HepG2 (cell line): ENCODE measurements at regions of chr17 and their contacts with region 1.

Region 1: DNA sequence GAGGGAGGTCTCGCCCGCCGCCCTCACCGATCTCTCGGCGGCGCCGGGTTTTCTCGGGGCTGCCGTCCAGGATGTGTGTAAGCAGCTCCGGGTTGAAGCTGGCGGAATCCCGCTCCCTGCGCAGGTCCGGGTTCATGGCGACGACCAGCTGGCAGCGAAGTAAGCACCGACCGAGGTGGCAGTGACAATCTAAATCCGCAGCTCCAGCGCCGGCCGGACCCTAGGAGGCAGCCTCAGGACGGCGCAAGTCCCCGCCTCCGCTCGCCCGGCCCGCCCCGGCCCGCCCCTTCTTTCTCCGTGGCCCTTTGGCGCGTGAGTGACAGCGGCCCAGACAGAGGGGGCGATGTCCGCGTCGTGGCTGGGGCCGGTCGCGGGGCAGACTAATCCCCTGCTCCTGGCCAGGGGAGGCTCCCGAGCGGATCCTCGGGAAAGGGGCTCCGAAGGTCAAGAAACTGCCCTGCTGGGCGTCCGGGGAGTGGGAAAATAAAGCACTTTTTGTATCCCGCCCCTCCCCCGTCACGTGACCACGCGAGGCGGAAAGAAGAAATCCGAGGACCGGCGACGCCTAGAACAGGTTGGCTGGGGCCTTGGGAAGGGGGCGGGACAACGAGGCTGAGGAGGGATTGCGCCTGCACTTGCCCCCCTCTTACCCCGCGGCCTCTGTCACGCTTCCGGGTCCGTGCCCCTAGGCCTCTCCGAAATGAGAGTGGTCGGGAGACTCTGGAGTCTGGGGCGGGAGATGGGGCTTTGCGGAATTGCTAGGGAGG is at the starts of genes ACOX1 and TEN1:
- DNase-seq: peak; percentile 98
- ATAC-seq: peak; percentile 87
- H3K4me3 ChIP-seq: peak within 1 kb of the TSS; percentile 74 to 98 (median 93)
- H3K27ac ChIP-seq: peak within 1 kb of the TSS; percentile 99
- H3K4me1 ChIP-seq: peaks cover 80% of the 10 kb centered on the region
- H3K27me3 ChIP-seq: no peaks in the 10 kb centered on the region; a peak in 1 of 5 replicates
- CTCF ChIP-seq: peak; percentile 72
- EP300 ChIP-seq: peak; percentile 12 to 52; a peak in 3 of 4 replicates
- POLR2A ChIP-seq: peak; percentile 87 to 97
- RAD21 ChIP-seq: no peak; the same call in none of the 2 replicates
- total RNA-seq, gene ACOX1: 120 and 156 TPM in 2 replicates
- total RNA-seq, gene TEN1: 14.7 and 18.0 TPM in 2 replicates

Region 2: DNA sequence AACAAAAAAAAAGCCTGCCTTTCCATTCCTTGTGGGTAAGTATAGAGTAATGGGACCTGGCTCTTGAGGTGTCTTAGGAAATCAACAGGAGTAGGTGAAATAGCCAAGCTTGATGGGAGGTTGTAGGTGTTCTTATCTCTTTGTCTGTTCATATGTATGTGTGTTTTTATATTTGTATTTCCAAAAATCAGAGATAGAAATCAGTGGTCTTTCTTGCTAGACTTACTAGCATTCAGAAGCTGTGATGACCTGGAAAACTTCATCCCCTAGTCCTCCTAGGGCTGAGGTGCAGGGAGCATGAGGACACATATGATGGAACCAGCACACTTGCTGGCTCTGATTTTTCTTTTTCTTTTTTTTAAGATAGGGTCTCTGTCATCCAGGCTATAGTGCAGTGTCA is 192.2 kb before region 1 on chr17:
- CTCF ChIA-PET with region 1: no interaction called
- POLR2A ChIA-PET with region 1: no interaction called
- in situ Hi-C with region 1: no loop called
- intact Hi-C with region 1: no loop called
- DNase-seq: no peak
- ATAC-seq: no peak
- H3K4me3 ChIP-seq: no peak overlapping the region
- H3K27ac ChIP-seq: no peak overlapping the region
- H3K4me1 ChIP-seq: peaks cover 45% of the 10 kb centered on the region
- H3K27me3 ChIP-seq: no peaks in the 10 kb centered on the region; a peak in 1 of 5 replicates
- CTCF ChIP-seq: no peak
- EP300 ChIP-seq: no peak
- POLR2A ChIP-seq: no peak
- RAD21 ChIP-seq: no peak

Region 3: GRCh38 chr17:75872434-75873351 is 106.4 kb before region 1 on chr17:
- CTCF ChIA-PET with region 1: no interaction called
- POLR2A ChIA-PET with region 1: interaction called, 16 read pairs
- in situ Hi-C with region 1: no loop called
- intact Hi-C with region 1: no loop called
- DNase-seq: peak; percentile 99
- ATAC-seq: peak; percentile 64
- H3K4me3 ChIP-seq: peak overlapping the region; percentile 13 to 62 (median 36); a peak in 5 of 6 replicates
- H3K27ac ChIP-seq: peak overlapping the region; percentile 97
- H3K4me1 ChIP-seq: peaks cover 88% of the 10 kb centered on the region
- H3K27me3 ChIP-seq: no peaks in the 10 kb centered on the region
- CTCF ChIP-seq: peak; percentile 43
- EP300 ChIP-seq: peak; percentile 81 to 87; a peak in 3 of 4 replicates
- POLR2A ChIP-seq: peak in 1 of 2 experiments; percentile 84; a peak in 2 of 4 replicates
- RAD21 ChIP-seq: peak; percentile 68

Region 4: GRCh38 chr17:75904749-75905521 is 74.2 kb before region 1 on chr17 and contains the start of gene MRPL38:
- CTCF ChIA-PET with region 1: no interaction called
- POLR2A ChIA-PET with region 1: interaction called, 32 read pairs
- in situ Hi-C with region 1: no loop called
- intact Hi-C with region 1: loop called (anchors 2 kb)
- DNase-seq: peak; percentile 95
- ATAC-seq: peak; percentile 97
- H3K4me3 ChIP-seq: peak within 1 kb of the TSS; percentile 95 to 100 (median 97)
- H3K27ac ChIP-seq: peak within 1 kb of the TSS; percentile 76
- H3K4me1 ChIP-seq: peaks cover 38% of the 10 kb centered on the region
- H3K27me3 ChIP-seq: no peaks in the 10 kb centered on the region; a peak in 1 of 5 replicates
- CTCF ChIP-seq: peak; percentile 100
- EP300 ChIP-seq: peak in 1 of 2 experiments; percentile 58; a peak in 2 of 4 replicates
- POLR2A ChIP-seq: peak; percentile 75 to 86
- RAD21 ChIP-seq: peak; percentile 100
- total RNA-seq, gene MRPL38: 88.8 and 125 TPM in 2 replicates

Region 5: GRCh38 chr17:75940724-75941441 is 38.2 kb before region 1 on chr17 and contains the start of gene FBF1:
- CTCF ChIA-PET with region 1: no interaction called
- POLR2A ChIA-PET with region 1: interaction called, 16 read pairs
- in situ Hi-C with region 1: no loop called
- intact Hi-C with region 1: no loop called
- DNase-seq: peak; percentile 93
- ATAC-seq: peak; percentile 96
- H3K4me3 ChIP-seq: peak within 1 kb of the TSS; percentile 73 to 83 (median 79)
- H3K27ac ChIP-seq: peak within 1 kb of the TSS; percentile 49
- H3K4me1 ChIP-seq: peaks cover 27% of the 10 kb centered on the region
- H3K27me3 ChIP-seq: no peaks in the 10 kb centered on the region; a peak in 1 of 5 replicates
- CTCF ChIP-seq: peak; percentile 58
- EP300 ChIP-seq: peak in 1 of 2 experiments; percentile 31; a peak in 1 of 4 replicates
- POLR2A ChIP-seq: peak; percentile 89 to 94
- RAD21 ChIP-seq: peak; percentile 70
- total RNA-seq, gene FBF1: 3.5 and 8.1 TPM in 2 replicates

Region 6: GRCh38 chr17:75959051-75959838 is 19.9 kb before region 1 on chr17:
- CTCF ChIA-PET with region 1: no interaction called
- POLR2A ChIA-PET with region 1: interaction called, 39 read pairs
- in situ Hi-C with region 1: no loop called
- intact Hi-C with region 1: no loop called
- DNase-seq: peak; percentile 58
- ATAC-seq: peak; percentile 69
- H3K4me3 ChIP-seq: no peak overlapping the region; a peak in 1 of 6 replicates
- H3K27ac ChIP-seq: peak overlapping the region; percentile 52
- H3K4me1 ChIP-seq: peaks cover 37% of the 10 kb centered on the region
- H3K27me3 ChIP-seq: no peaks in the 10 kb centered on the region
- CTCF ChIP-seq: no peak
- EP300 ChIP-seq: peak in 1 of 2 experiments; percentile 58; a peak in 1 of 4 replicates
- POLR2A ChIP-seq: no peak
- RAD21 ChIP-seq: no peak

Region 7: GRCh38 chr17:76078860-76079534 is 99.9 kb after region 1 on chr17 and contains the start of gene ZACN:
- CTCF ChIA-PET with region 1: no interaction called
- POLR2A ChIA-PET with region 1: no interaction called
- in situ Hi-C with region 1: no loop called
- intact Hi-C with region 1: no loop called
- DNase-seq: no peak
- ATAC-seq: no peak
- H3K4me3 ChIP-seq: no peak within 1 kb of the TSS
- H3K27ac ChIP-seq: no peak within 1 kb of the TSS
- H3K4me1 ChIP-seq: peaks cover 36% of the 10 kb centered on the region
- H3K27me3 ChIP-seq: peaks cover 24 to 51% of the 10 kb centered on the region in 2 experiments; a peak in 4 of 5 replicates
- CTCF ChIP-seq: no peak
- EP300 ChIP-seq: no peak
- POLR2A ChIP-seq: no peak
- RAD21 ChIP-seq: no peak
- total RNA-seq, gene ZACN: 0.15 TPM in 1 of 2 replicates, not detected in the other

Region 8: DNA sequence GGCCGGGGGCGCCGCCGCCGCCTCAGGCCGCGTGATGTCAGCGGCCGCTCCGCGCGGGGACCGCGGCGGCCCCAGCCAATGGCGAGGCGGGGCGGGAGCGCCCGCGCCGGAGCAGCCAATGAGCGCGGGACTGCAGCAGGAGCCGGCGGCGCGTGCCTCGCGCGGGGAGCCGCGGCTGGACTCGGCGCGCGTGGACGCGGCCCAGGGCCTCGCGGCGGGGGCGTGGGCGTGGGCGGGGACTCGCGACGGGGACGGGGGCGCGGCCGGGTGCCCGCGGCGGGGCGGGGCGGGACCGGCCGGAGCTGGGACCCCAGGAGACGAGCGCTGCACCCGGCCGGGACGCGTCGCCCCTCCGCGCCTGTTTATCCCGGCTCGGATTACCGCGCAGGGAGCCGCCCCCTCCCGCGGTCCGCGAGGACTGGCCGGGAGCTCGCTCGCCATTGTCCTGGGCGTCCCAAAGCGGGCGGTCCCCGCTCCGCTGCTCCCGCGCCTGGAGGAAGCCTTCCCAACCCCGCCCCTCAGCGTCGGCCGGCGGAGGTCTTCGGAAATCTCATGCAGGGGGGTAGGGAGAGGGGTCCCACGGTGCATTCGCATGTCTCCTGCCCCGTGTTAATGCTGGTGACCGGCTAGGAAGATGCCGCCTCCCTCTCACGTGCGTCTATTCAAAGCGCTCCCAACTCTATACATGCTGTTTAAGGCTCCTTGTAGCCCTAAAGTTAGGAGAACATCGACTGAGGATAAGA is 261.5 kb after region 1 on chr17 and contains the start of gene RNF157:
- CTCF ChIA-PET with region 1: no interaction called
- POLR2A ChIA-PET with region 1: no interaction called
- in situ Hi-C with region 1: no loop called
- intact Hi-C with region 1: no loop called
- DNase-seq: peak; percentile 17
- ATAC-seq: peak; percentile 67
- H3K4me3 ChIP-seq: peak within 1 kb of the TSS; percentile 35 to 70 (median 40); a peak in 5 of 6 replicates
- H3K27ac ChIP-seq: no peak within 1 kb of the TSS
- H3K4me1 ChIP-seq: peaks cover 48% of the 10 kb centered on the region
- H3K27me3 ChIP-seq: peaks cover 12 to 52% of the 10 kb centered on the region in 2 experiments; a peak in 4 of 5 replicates
- CTCF ChIP-seq: no peak
- EP300 ChIP-seq: no peak
- POLR2A ChIP-seq: no peak
- RAD21 ChIP-seq: no peak
- total RNA-seq, gene RNF157: 1.4 and 1.5 TPM in 2 replicates